ENCODE measurements at regions of chr19 and their contacts with region 1.

Region 1: GRCh38 chr19:49850473-49851342 is at the start of gene PTOV1:
- DNase-seq: peak; percentile 91 to 95 (median 95)
- H3K4me3 ChIP-seq: peak within 1 kb of the TSS; percentile 62 to 89 (median 84)
- H3K27ac ChIP-seq: peak within 1 kb of the TSS; percentile 90 to 93
- H3K4me1 ChIP-seq: peaks cover 7 to 38% (median 29%) of the 10 kb centered on the region in 4 experiments
- H3K27me3 ChIP-seq: no peaks in the 10 kb centered on the region

Region 2: GRCh38 chr19:49862376-49863253 is 11.9 kb after region 1 on chr19:
- CTCF ChIA-PET with region 1: interaction called, 11 read pairs
- POLR2A ChIA-PET with region 1: interaction called, 4 read pairs
- DNase-seq: peak in 2 of 3 donors; percentile 41 to 65
- H3K4me3 ChIP-seq: no peak overlapping the region
- H3K27ac ChIP-seq: no peak overlapping the region
- H3K4me1 ChIP-seq: peaks cover 6 to 25% (median 22%) of the 10 kb centered on the region in 4 experiments
- H3K27me3 ChIP-seq: no peaks in the 10 kb centered on the region

Region 3: DNA sequence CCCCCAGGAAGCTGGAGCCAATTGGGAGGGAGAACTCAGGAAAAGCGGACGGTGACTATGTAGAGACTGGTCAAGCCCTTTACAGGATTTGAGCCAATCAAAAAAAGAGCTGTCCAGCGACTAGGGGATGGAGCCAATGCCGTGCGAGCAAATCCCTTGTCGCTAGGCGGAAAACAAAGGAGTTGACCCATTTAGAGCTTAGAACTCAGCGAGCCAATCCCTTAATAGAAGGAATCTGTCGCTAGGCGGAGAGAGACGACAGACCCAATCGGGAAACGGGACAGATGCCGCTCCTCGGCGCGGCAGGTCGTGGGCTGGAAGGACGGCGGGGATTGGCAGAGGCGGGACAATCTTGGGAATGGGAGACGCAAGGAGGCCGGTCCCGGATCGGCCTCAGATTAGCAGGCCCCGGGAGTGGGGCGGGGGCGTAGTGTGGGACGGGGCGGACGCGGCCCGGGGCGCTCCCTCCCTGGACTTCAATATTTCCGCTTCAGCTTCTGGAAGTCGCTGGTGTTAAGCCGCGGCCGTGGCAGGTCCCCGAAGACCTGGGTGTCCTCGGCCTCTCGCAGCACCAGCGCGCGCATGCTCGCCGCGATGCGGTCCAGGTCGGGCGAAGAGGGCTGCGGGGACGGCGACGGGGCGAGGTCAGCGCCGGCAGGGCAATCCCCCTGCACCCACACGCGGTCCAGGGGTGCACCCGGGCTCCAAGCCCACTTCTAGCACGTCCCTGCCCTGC is 18.9 kb after region 1 on chr19:
- CTCF ChIA-PET with region 1: interaction called, 11 read pairs
- POLR2A ChIA-PET with region 1: interaction called, 7 read pairs
- DNase-seq: peak; percentile 99
- H3K4me3 ChIP-seq: peak overlapping the region; percentile 4 to 81 (median 66)
- H3K27ac ChIP-seq: peak overlapping the region; percentile 70 to 91
- H3K4me1 ChIP-seq: peaks cover 10 to 65% (median 57%) of the 10 kb centered on the region in 4 experiments
- H3K27me3 ChIP-seq: no peaks in the 10 kb centered on the region